ENCODE measurements at regions of chr1 and their contacts with region 1.

Region 1: GRCh38 chr1:202192770-202193613 is 607 bp upstream of the LGR6 start:
- H3K4me3 ChIP-seq: no peak overlapping the region
- H3K27ac ChIP-seq: no peak overlapping the region
- H3K4me1 ChIP-seq: no peaks in the 10 kb centered on the region
- CTCF ChIP-seq: peak; percentile 56

Region 2: GRCh38 chr1:201990427-201990826 is 202.6 kb before region 1 on chr1:
- CTCF ChIA-PET with region 1: no interaction called
- POLR2A ChIA-PET with region 1: no interaction called
- H3K4me3 ChIP-seq: no peak overlapping the region
- H3K27ac ChIP-seq: no peak overlapping the region
- H3K4me1 ChIP-seq: no peaks in the 10 kb centered on the region
- CTCF ChIP-seq: no peak

Region 3: DNA sequence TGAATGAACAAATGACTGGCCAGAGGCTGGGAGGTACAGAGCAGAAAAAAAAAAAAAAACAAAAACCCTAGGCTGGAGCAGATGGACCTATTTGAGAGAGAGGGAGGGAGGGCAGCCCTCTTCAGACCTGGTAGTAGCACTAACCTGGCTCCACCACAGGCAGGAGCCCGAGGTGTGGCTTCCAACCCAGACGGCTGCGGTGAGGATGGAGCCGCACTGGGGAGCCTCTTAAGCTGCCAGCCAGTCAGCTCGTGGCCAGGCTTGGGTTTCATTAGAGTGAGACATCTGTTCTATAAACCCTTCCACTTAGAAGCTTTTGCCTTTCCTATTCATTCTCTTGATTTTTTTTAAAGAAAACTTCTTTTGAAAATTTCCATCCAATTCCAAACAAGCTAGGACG is 17.4 kb after region 1 on chr1:
- CTCF ChIA-PET with region 1: interaction called, 15 read pairs
- POLR2A ChIA-PET with region 1: no interaction called
- H3K4me3 ChIP-seq: no peak overlapping the region
- H3K27ac ChIP-seq: no peak overlapping the region
- H3K4me1 ChIP-seq: no peaks in the 10 kb centered on the region
- CTCF ChIP-seq: peak; percentile 40; the same call in 1 of the 2 replicates

Region 4: DNA sequence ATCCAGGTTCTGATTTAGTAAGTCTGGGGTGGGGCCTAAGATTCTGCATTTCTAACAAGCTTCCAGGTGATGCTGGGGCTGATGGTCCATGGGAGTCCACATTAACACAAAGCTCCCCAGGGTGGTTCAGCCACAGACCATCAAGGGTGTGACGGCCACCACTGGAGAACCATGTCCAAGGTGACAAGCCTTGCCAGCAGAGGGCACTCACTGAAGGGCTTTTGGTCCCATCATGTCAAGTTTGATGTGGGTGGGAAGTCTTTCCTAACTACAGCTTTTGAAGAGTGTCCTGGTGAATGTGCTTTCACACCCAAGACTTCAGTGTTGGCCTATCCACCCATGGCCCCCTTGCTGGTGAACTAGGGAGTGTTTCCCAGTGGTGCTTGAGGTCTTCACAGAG is 81.6 kb after region 1 on chr1:
- CTCF ChIA-PET with region 1: interaction called, 18 read pairs
- POLR2A ChIA-PET with region 1: no interaction called
- H3K4me3 ChIP-seq: no peak overlapping the region
- H3K27ac ChIP-seq: no peak overlapping the region
- H3K4me1 ChIP-seq: no peaks in the 10 kb centered on the region
- CTCF ChIP-seq: peak; percentile 32; the same call in 1 of the 2 replicates

Region 5: GRCh38 chr1:202315576-202316168 is 122.7 kb after region 1 on chr1:
- CTCF ChIA-PET with region 1: interaction called, 155 read pairs
- POLR2A ChIA-PET with region 1: no interaction called
- H3K4me3 ChIP-seq: no peak overlapping the region
- H3K27ac ChIP-seq: no peak overlapping the region
- H3K4me1 ChIP-seq: no peaks in the 10 kb centered on the region; the same call in 1 of the 2 replicates
- CTCF ChIP-seq: peak; percentile 79

Region 6: GRCh38 chr1:202343652-202344349 is 150.8 kb after region 1 on chr1:
- CTCF ChIA-PET with region 1: interaction called, 17 read pairs
- POLR2A ChIA-PET with region 1: interaction called, 4 read pairs
- H3K4me3 ChIP-seq: no peak overlapping the region
- H3K27ac ChIP-seq: no peak overlapping the region
- H3K4me1 ChIP-seq: no peaks in the 10 kb centered on the region
- CTCF ChIP-seq: peak; percentile 61; the same call in 1 of the 2 replicates

Measured in HEK293 (cell line).